ENCODE measurements at regions of chr10 and their contacts with region 1.

Region 1: DNA sequence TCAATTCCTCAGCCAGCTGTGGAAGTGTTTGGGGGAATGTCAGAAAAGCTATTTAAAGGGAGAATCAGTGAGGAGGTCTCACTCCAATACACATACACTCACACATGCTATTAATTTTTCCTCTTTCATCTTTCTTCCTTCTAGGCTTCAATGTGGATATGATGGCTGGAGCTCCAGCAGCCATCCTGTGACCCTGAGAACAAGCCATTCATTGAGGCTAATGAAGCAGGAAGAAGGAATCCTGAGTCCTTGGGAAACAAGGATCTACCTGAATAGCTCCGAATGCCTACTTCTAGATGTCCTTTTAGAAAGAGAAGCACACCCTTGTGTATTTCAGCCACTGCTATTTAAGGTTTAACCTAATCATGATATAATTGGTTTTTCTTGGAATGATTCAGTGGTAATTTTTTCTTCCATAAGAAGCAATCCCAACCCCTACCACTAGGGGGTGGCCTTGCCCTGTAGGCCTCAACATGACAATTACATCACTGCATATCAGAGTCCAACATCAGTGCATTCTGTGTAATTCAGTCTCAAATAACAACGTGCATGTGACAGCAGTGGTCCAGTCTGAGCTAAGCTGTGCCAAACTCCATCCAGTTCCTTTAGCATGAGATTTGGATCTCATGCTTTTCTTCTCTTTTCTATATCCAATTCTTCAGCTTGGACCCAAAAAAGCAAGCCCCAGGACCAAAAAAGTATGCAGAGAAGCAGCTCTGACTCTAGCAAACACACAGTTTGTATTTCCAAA is 85.3 kb upstream of the ANKRD1 start:
- DNase-seq: peak; percentile 37 to 81 (median 68)
- ATAC-seq: peak; percentile 91
- H3K4me3 ChIP-seq: no peak overlapping the region
- H3K4me3 Mint-ChIP-seq: peak overlapping the region; percentile 73
- H3K27ac ChIP-seq: peak overlapping the region in 1 of 2 experiments; percentile 11
- H3K27ac Mint-ChIP-seq: peak overlapping the region; percentile 73
- H3K4me1 ChIP-seq: peaks cover 20% of the 10 kb centered on the region
- H3K4me1 Mint-ChIP-seq: peaks cover 21% of the 10 kb centered on the region
- H3K27me3 ChIP-seq: no peaks in the 10 kb centered on the region
- H3K27me3 Mint-ChIP-seq: no peaks in the 10 kb centered on the region
- CTCF ChIP-seq: peak; percentile 94

Region 2: GRCh38 chr10:90504172-90504571 is 502.0 kb before region 1 on chr10:
- CTCF ChIA-PET with region 1: no interaction called
- POLR2A ChIA-PET with region 1: no interaction called
- intact Hi-C with region 1: no loop called
- DNase-seq: no peak
- ATAC-seq: no peak
- H3K4me3 ChIP-seq: no peak overlapping the region
- H3K4me3 Mint-ChIP-seq: no peak overlapping the region
- H3K27ac ChIP-seq: no peak overlapping the region
- H3K27ac Mint-ChIP-seq: no peak overlapping the region
- H3K4me1 ChIP-seq: no peaks in the 10 kb centered on the region
- H3K4me1 Mint-ChIP-seq: no peaks in the 10 kb centered on the region
- H3K27me3 ChIP-seq: no peaks in the 10 kb centered on the region
- H3K27me3 Mint-ChIP-seq: no peaks in the 10 kb centered on the region
- CTCF ChIP-seq: no peak

Region 3: GRCh38 chr10:91017198-91017597 is 11.0 kb after region 1 on chr10:
- CTCF ChIA-PET with region 1: interaction called, 16 read pairs
- POLR2A ChIA-PET with region 1: interaction called, 5 read pairs
- intact Hi-C with region 1: no loop called
- DNase-seq: no peak
- ATAC-seq: no peak
- H3K4me3 ChIP-seq: no peak overlapping the region
- H3K4me3 Mint-ChIP-seq: no peak overlapping the region
- H3K27ac ChIP-seq: no peak overlapping the region
- H3K27ac Mint-ChIP-seq: no peak overlapping the region
- H3K4me1 ChIP-seq: no peaks in the 10 kb centered on the region
- H3K4me1 Mint-ChIP-seq: no peaks in the 10 kb centered on the region
- H3K27me3 ChIP-seq: no peaks in the 10 kb centered on the region
- H3K27me3 Mint-ChIP-seq: no peaks in the 10 kb centered on the region
- CTCF ChIP-seq: no peak

Region 4: DNA sequence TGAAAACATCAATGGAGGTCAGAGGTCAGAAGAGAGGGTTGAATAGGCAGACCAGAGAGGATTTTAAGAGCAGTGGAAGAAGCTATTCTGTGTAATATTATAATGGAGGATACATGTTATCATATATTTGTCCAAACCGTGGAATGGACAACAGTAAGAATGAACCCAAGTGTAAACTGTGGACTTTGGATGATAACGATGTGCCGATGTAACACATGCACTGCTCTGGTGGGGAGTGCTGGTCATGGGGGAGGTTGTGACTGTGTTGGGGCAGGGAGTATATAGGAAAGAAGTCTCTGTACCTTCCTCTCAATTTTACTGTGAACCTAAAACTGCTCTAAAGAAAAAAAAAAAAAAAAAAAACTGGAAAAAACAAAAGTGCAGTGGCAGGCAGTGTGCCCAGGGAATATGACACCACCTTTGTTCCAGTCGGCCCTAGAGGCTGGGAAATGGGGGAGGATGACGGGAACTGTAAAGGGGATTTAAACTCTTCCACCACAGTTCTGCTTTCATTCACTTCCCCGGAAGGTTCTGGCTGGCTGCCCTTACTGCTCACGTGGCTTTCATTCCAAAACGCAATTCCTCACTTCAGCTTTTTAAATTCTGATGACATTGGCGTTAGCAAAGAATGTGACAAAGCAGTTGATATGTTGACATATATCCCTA is 28.5 kb after region 1 on chr10:
- CTCF ChIA-PET with region 1: interaction called, 27 read pairs
- POLR2A ChIA-PET with region 1: no interaction called
- intact Hi-C with region 1: no loop called
- DNase-seq: no peak
- ATAC-seq: no peak
- H3K4me3 ChIP-seq: no peak overlapping the region
- H3K4me3 Mint-ChIP-seq: peak overlapping the region; percentile 40
- H3K27ac ChIP-seq: peak overlapping the region; percentile 3 to 54
- H3K27ac Mint-ChIP-seq: peak overlapping the region; percentile 83
- H3K4me1 ChIP-seq: peaks cover 17% of the 10 kb centered on the region
- H3K4me1 Mint-ChIP-seq: peaks cover 27% of the 10 kb centered on the region
- H3K27me3 ChIP-seq: no peaks in the 10 kb centered on the region
- H3K27me3 Mint-ChIP-seq: no peaks in the 10 kb centered on the region
- CTCF ChIP-seq: no peak

Region 5: GRCh38 chr10:91242940-91243339 is 236.8 kb after region 1 on chr10:
- CTCF ChIA-PET with region 1: interaction called, 268 read pairs
- POLR2A ChIA-PET with region 1: no interaction called
- intact Hi-C with region 1: no loop called
- DNase-seq: no peak
- ATAC-seq: no peak
- H3K4me3 ChIP-seq: no peak overlapping the region
- H3K4me3 Mint-ChIP-seq: no peak overlapping the region
- H3K27ac ChIP-seq: no peak overlapping the region
- H3K27ac Mint-ChIP-seq: peak overlapping the region; percentile 58
- H3K4me1 ChIP-seq: peaks cover 37% of the 10 kb centered on the region
- H3K4me1 Mint-ChIP-seq: peaks cover 24% of the 10 kb centered on the region
- H3K27me3 ChIP-seq: no peaks in the 10 kb centered on the region
- H3K27me3 Mint-ChIP-seq: no peaks in the 10 kb centered on the region
- CTCF ChIP-seq: no peak

Region 6: GRCh38 chr10:91257310-91257709 is 251.1 kb after region 1 on chr10:
- CTCF ChIA-PET with region 1: interaction called, 268 read pairs
- POLR2A ChIA-PET with region 1: interaction called, 3 read pairs
- intact Hi-C with region 1: no loop called
- DNase-seq: no peak
- ATAC-seq: no peak
- H3K4me3 ChIP-seq: no peak overlapping the region
- H3K4me3 Mint-ChIP-seq: no peak overlapping the region
- H3K27ac ChIP-seq: no peak overlapping the region
- H3K27ac Mint-ChIP-seq: no peak overlapping the region
- H3K4me1 ChIP-seq: no peaks in the 10 kb centered on the region
- H3K4me1 Mint-ChIP-seq: no peaks in the 10 kb centered on the region
- H3K27me3 ChIP-seq: no peaks in the 10 kb centered on the region
- H3K27me3 Mint-ChIP-seq: no peaks in the 10 kb centered on the region
- CTCF ChIP-seq: no peak

Region 7: DNA sequence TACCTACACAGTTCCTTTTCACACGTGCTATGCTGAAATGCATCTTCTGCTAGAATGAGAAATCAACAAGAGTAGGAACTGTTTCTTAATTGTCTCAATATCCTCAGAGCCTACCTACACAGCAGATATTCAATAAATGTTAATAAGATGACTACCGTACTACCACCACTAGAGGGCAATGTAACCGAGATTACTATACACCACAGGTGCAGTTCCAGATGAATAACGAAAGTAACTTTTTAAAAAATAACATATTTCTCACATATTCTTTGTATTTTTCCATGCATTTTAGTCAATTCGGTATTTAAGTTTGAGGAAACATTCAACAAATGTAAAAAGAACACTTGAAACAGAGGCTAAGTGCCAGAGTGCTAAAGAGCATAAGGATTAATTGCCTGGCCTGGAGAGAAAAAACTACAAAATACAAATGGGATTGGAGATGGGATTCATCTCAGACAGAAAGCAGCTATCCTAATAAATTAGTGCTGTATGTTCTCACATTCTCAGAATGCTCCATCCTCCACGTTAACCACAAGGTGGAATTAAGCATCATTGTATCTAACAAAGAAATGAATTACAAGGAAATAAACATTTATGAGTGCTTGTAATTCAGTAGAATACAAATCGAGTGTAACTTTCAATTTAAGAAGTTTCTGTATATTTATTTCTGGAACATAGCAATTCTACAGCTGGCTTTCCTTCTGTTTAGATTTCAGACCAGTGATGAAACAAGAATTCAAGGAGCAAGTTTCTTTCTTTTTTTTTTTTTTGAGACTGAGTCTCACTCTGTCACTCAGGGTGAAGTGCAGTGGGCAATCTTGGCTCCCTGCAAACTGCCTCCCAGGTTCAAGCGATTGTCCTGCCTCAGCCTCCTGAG is 383.7 kb after region 1 on chr10:
- CTCF ChIA-PET with region 1: interaction called, 3 read pairs
- POLR2A ChIA-PET with region 1: no interaction called
- intact Hi-C with region 1: loop called in 1 of 2 experiments (anchors 1 kb)
- DNase-seq: peak in 3 of 9 experiments; percentile 27 to 84 (median 77)
- ATAC-seq: peak; percentile 99
- H3K4me3 ChIP-seq: no peak overlapping the region
- H3K4me3 Mint-ChIP-seq: peak overlapping the region; percentile 42
- H3K27ac ChIP-seq: no peak overlapping the region
- H3K27ac Mint-ChIP-seq: no peak overlapping the region
- H3K4me1 ChIP-seq: peaks cover 4% of the 10 kb centered on the region
- H3K4me1 Mint-ChIP-seq: peaks cover 8% of the 10 kb centered on the region
- H3K27me3 ChIP-seq: no peaks in the 10 kb centered on the region
- H3K27me3 Mint-ChIP-seq: peaks cover 14% of the 10 kb centered on the region
- CTCF ChIP-seq: peak; percentile 75

Region 8: GRCh38 chr10:91632671-91633550 is 626.7 kb after region 1 on chr10 and contains the start of gene PPP1R3C:
- CTCF ChIA-PET with region 1: interaction called, 8 read pairs
- POLR2A ChIA-PET with region 1: no interaction called
- intact Hi-C with region 1: loop called in 1 of 2 experiments (anchors 2 kb)
- DNase-seq: peak in 6 of 9 experiments; percentile 9 to 47 (median 17)
- ATAC-seq: peak; percentile 46
- H3K4me3 ChIP-seq: peak within 1 kb of the TSS in 1 of 2 experiments; percentile 54
- H3K4me3 Mint-ChIP-seq: peak within 1 kb of the TSS; percentile 69
- H3K27ac ChIP-seq: no peak within 1 kb of the TSS
- H3K27ac Mint-ChIP-seq: no peak within 1 kb of the TSS
- H3K4me1 ChIP-seq: peaks cover 15% of the 10 kb centered on the region
- H3K4me1 Mint-ChIP-seq: peaks cover 9% of the 10 kb centered on the region
- H3K27me3 ChIP-seq: peaks cover 3 to 4% of the 10 kb centered on the region in 2 experiments
- H3K27me3 Mint-ChIP-seq: peaks cover 59% of the 10 kb centered on the region
- CTCF ChIP-seq: no peak
- total RNA-seq, gene PPP1R3C: not detected